T-cell (primary cell): ENCODE measurements at regions of chr5 and their contacts with region 1.

Region 1: DNA sequence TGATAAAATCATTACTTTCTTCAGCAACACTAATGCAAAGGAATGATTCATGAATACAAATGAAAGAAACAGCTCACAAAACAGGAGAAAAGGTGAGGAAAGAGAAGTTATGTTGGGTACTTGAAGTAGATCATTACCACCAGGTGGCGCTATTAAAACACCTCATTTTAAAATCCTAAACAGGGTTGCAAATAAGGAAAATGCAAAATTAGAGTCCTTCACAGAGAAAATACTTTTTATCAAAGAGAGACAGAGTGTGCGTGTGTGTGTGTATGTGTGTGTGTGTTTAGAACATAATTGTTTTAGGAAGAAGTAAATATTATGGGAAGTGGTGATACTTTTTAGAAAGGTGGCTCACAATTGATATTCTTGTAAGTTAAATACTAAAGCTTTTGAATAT is 49.5 kb upstream of the CD180 start:
- DNase-seq: peak in 8 of 35 experiments; percentile 5 to 84 (median 22)
- ATAC-seq: peak in 2 of 4 experiments; percentile 47 to 69
- H3K4me3 ChIP-seq: no peak overlapping the region
- H3K4me3 Mint-ChIP-seq: no peak overlapping the region
- H3K27ac ChIP-seq: no peak overlapping the region
- H3K27ac Mint-ChIP-seq: no peak overlapping the region
- H3K4me1 ChIP-seq: peaks cover 0 to 7% of the 10 kb centered on the region in 2 experiments
- H3K4me1 Mint-ChIP-seq: peaks cover 6 to 15% (median 12%) of the 10 kb centered on the region in 3 donors
- H3K27me3 ChIP-seq: no peaks in the 10 kb centered on the region
- H3K27me3 Mint-ChIP-seq: no peaks in the 10 kb centered on the region

Region 2: GRCh38 chr5:66860199-66860975 is 385.7 kb before region 1 on chr5:
- CTCF ChIA-PET with region 1: interaction called in 1 of 2 experiments, 10 read pairs
- POLR2A ChIA-PET with region 1: no interaction called
- DNase-seq: no peak
- ATAC-seq: no peak
- H3K4me3 ChIP-seq: no peak overlapping the region
- H3K4me3 Mint-ChIP-seq: no peak overlapping the region
- H3K27ac ChIP-seq: no peak overlapping the region
- H3K27ac Mint-ChIP-seq: no peak overlapping the region
- H3K4me1 ChIP-seq: no peaks in the 10 kb centered on the region
- H3K4me1 Mint-ChIP-seq: no peaks in the 10 kb centered on the region
- H3K27me3 ChIP-seq: peaks cover 0 to 9% of the 10 kb centered on the region in 2 experiments
- H3K27me3 Mint-ChIP-seq: peaks cover 16 to 22% of the 10 kb centered on the region in 2 donors

Region 3: DNA sequence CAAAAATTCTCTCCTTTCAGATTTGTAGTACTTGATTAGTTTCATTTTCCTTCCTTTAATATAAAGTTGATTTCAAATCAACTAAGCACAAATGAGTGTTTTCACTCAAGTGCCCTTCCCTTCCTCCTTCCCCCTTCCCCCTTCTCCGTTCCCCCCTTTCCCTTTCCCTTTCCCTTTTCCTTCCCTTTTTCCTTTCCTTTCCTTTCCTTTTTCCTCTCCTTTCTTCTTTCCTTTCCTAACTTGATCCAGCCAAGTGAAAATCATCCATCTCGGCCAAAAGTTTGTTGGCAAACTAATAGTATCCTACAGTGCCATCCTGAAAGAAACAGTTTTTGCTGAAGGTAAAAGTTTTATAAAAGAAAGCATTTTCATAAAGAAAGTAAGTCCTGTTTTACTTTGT is 35.8 kb after region 1 on chr5:
- CTCF ChIA-PET with region 1: no interaction called
- POLR2A ChIA-PET with region 1: no interaction called
- DNase-seq: no peak
- ATAC-seq: no peak
- H3K4me3 ChIP-seq: no peak overlapping the region
- H3K4me3 Mint-ChIP-seq: no peak overlapping the region
- H3K27ac ChIP-seq: no peak overlapping the region
- H3K27ac Mint-ChIP-seq: no peak overlapping the region
- H3K4me1 ChIP-seq: no peaks in the 10 kb centered on the region
- H3K4me1 Mint-ChIP-seq: no peaks in the 10 kb centered on the region
- H3K27me3 ChIP-seq: peaks cover 0 to 2% of the 10 kb centered on the region in 2 experiments
- H3K27me3 Mint-ChIP-seq: no peaks in the 10 kb centered on the region

Region 4: GRCh38 chr5:68272289-68272688 is 1026.2 kb after region 1 on chr5:
- CTCF ChIA-PET with region 1: interaction called, 6 to 40 read pairs
- POLR2A ChIA-PET with region 1: no interaction called
- DNase-seq: peak in 1 of 35 experiments; percentile 51
- ATAC-seq: no peak
- H3K4me3 ChIP-seq: no peak overlapping the region
- H3K4me3 Mint-ChIP-seq: no peak overlapping the region
- H3K27ac ChIP-seq: no peak overlapping the region
- H3K27ac Mint-ChIP-seq: peak overlapping the region; percentile 17 to 98
- H3K4me1 ChIP-seq: peaks cover 26 to 41% of the 10 kb centered on the region in 2 experiments
- H3K4me1 Mint-ChIP-seq: peaks cover 77 to 96% (median 94%) of the 10 kb centered on the region in 3 donors
- H3K27me3 ChIP-seq: no peaks in the 10 kb centered on the region
- H3K27me3 Mint-ChIP-seq: no peaks in the 10 kb centered on the region

Region 5: DNA sequence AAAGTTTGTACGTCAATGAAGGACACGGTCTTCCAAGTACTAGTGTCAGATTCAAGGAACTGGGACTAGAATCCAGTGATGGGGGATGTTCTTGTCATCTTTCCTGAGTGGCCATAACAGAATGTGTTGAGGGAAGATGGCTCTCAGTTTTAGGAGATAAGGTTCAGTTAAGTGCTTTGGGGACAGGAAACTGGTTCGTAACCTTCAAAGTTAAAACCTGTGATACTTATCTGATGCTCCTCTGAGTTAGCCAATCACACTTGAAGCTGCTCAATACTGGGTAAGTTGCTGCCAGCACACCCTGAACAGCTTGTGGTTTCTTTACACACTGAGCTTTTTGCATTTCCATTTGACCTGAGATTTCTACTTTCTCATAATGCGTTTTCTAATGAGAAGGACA is 1033.9 kb after region 1 on chr5:
- CTCF ChIA-PET with region 1: interaction called, 3 to 12 read pairs
- POLR2A ChIA-PET with region 1: interaction called in 1 of 2 experiments, 3 read pairs
- DNase-seq: peak in 32 of 35 experiments; percentile 24 to 88 (median 48)
- ATAC-seq: peak; percentile 93 to 97 (median 95)
- H3K4me3 ChIP-seq: peak overlapping the region; percentile 29 to 57
- H3K4me3 Mint-ChIP-seq: peak overlapping the region; percentile 85 to 88 (median 86)
- H3K27ac ChIP-seq: peak overlapping the region; percentile 84
- H3K27ac Mint-ChIP-seq: peak overlapping the region; percentile 98
- H3K4me1 ChIP-seq: peaks cover 46 to 49% of the 10 kb centered on the region in 2 experiments
- H3K4me1 Mint-ChIP-seq: peaks cover 86 to 91% (median 90%) of the 10 kb centered on the region in 3 donors
- H3K27me3 ChIP-seq: no peaks in the 10 kb centered on the region
- H3K27me3 Mint-ChIP-seq: no peaks in the 10 kb centered on the region